AG04449 (cell line): ENCODE measurements at regions of chr19 and their contacts with region 1.

Region 1: GRCh38 chr19:50357178-50358100 is 8.0 kb downstream of the NAPSA start:
- DNase-seq: no peak
- H3K4me3 ChIP-seq: peak overlapping the region; percentile 45
- CTCF ChIP-seq: peak; percentile 73

Region 2: GRCh38 chr19:50401605-50402450 is 44.4 kb after region 1 on chr19:
- CTCF ChIA-PET with region 1: no interaction called
- POLR2A ChIA-PET with region 1: no interaction called
- DNase-seq: no peak
- H3K4me3 ChIP-seq: no peak overlapping the region
- CTCF ChIP-seq: no peak

Region 3: GRCh38 chr19:50461066-50461875 is 103.8 kb after region 1 on chr19:
- CTCF ChIA-PET with region 1: interaction called, 56 read pairs
- POLR2A ChIA-PET with region 1: no interaction called
- DNase-seq: no peak
- H3K4me3 ChIP-seq: no peak overlapping the region
- CTCF ChIP-seq: peak; percentile 88

Region 4: GRCh38 chr19:50478901-50479736 is 121.7 kb after region 1 on chr19:
- CTCF ChIA-PET with region 1: interaction called, 14 read pairs
- POLR2A ChIA-PET with region 1: no interaction called
- DNase-seq: no peak
- H3K4me3 ChIP-seq: no peak overlapping the region
- CTCF ChIP-seq: peak; percentile 68

Region 5: DNA sequence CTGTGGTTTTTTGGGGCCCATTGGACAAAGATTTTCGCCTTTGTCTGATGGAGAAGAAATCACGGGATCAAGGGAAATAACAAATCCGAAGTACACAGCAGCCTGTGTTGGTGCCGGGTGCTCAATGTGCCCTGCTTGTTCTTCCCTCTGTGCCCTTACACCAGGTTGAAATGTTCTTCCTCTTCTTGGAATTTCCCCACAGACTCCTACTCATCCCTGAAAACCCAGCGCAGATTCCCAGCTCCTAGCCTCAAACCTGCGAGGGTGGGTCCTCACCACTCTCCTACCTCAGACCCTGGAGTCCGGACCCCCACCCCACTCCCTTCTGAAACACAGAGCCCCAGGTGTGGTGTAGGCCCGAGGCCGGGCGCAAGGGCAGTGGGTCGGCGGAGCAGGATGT is 427.9 kb after region 1 on chr19:
- CTCF ChIA-PET with region 1: interaction called, 23 read pairs
- POLR2A ChIA-PET with region 1: no interaction called
- DNase-seq: no peak
- H3K4me3 ChIP-seq: no peak overlapping the region
- CTCF ChIP-seq: no peak